CD4-positive, alpha-beta T cell (primary cell): ENCODE measurements at regions of chr2 and their contacts with region 1.

Region 1: DNA sequence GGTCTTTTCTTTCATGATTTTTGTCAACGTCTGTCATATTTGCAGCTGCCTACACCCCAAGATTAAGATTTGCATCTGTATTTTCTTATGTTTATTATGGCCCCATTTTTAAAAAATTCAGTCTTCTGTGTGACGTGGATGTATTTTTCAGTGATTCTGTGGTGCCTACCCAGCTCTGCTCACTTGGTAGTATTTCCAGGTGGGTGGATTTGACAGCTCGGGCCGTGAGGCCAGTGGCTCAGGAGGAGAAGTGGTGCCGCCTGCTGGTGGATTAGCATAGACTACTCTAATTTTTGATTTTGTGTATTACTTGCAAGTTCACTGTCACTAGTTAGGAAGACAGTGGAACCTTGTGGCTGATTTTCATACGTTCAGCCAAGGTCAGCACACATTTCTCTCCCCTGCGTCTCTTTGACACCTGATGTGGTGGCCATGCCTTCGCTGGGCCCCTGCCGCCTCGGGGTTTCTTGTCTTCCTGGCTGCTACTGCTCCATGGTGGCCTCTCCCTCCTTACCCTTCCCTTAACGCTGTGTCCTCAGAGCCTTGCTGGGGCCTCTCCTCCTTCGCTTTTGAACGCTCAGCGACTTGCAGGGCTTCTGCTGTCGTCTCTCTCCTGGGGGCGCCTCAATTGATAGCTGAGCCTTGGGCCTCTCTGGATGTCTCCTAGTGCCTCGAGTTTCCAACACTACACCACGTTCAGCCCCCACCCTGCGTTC is 89.3 kb downstream of the DGKD start:
- DNase-seq: peak; percentile 74 to 92 (median 82)
- ATAC-seq: peak; percentile 99
- H3K4me3 ChIP-seq: no peak overlapping the region
- H3K4me3 Mint-ChIP-seq: no peak overlapping the region
- H3K27ac ChIP-seq: no peak overlapping the region
- H3K27ac Mint-ChIP-seq: peak overlapping the region; percentile 55
- H3K4me1 ChIP-seq: peaks cover 12% of the 10 kb centered on the region
- H3K4me1 Mint-ChIP-seq: peaks cover 32% of the 10 kb centered on the region
- H3K27me3 ChIP-seq: no peaks in the 10 kb centered on the region
- H3K27me3 Mint-ChIP-seq: no peaks in the 10 kb centered on the region
- CTCF ChIP-seq: peak; percentile 95

Region 2: GRCh38 chr2:232761301-232761907 is 682.2 kb before region 1 on chr2:
- CTCF ChIA-PET with region 1: no interaction called
- POLR2A ChIA-PET with region 1: no interaction called
- intact Hi-C with region 1: loop called in 1 of 2 experiments (anchors 5 kb)
- DNase-seq: peak in 10 of 14 experiments; percentile 3 to 65 (median 30)
- ATAC-seq: peak; percentile 76
- H3K4me3 ChIP-seq: no peak overlapping the region
- H3K4me3 Mint-ChIP-seq: no peak overlapping the region
- H3K27ac ChIP-seq: no peak overlapping the region
- H3K27ac Mint-ChIP-seq: no peak overlapping the region
- H3K4me1 ChIP-seq: peaks cover 4% of the 10 kb centered on the region
- H3K4me1 Mint-ChIP-seq: peaks cover 19% of the 10 kb centered on the region
- H3K27me3 ChIP-seq: no peaks in the 10 kb centered on the region
- H3K27me3 Mint-ChIP-seq: no peaks in the 10 kb centered on the region
- CTCF ChIP-seq: peak; percentile 62

Region 3: DNA sequence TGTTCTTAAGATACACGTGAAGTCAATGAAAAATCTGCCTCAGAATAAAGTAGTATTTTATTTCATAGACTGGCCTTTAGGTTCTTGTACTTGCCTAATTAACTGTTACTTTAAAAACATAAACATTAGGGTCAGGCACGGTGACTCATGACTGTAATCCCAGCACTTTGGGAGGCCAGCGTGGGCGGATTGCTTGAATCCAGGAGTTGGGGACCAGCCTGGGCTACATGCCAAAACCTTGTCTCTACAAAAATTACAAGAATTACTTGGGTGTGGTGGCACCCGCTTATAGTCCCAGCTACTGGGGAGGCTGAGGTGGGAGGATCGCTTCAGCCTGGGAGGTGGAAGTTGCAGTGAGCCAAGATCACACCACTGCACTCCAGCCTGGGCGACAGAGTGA is 589.5 kb before region 1 on chr2:
- CTCF ChIA-PET with region 1: interaction called, 5 read pairs
- POLR2A ChIA-PET with region 1: no interaction called
- intact Hi-C with region 1: loop called (anchors 1 to 5 kb)
- DNase-seq: no peak
- ATAC-seq: no peak
- H3K4me3 ChIP-seq: no peak overlapping the region
- H3K4me3 Mint-ChIP-seq: no peak overlapping the region
- H3K27ac ChIP-seq: no peak overlapping the region
- H3K27ac Mint-ChIP-seq: peak overlapping the region; percentile 25
- H3K4me1 ChIP-seq: no peaks in the 10 kb centered on the region
- H3K4me1 Mint-ChIP-seq: no peaks in the 10 kb centered on the region
- H3K27me3 ChIP-seq: no peaks in the 10 kb centered on the region
- H3K27me3 Mint-ChIP-seq: no peaks in the 10 kb centered on the region
- CTCF ChIP-seq: no peak

Region 4: GRCh38 chr2:233288719-233289118 is 154.9 kb before region 1 on chr2:
- CTCF ChIA-PET with region 1: no interaction called
- POLR2A ChIA-PET with region 1: no interaction called
- intact Hi-C with region 1: loop called in 1 of 2 experiments (anchors 10 kb)
- DNase-seq: no peak
- ATAC-seq: no peak
- H3K4me3 ChIP-seq: no peak overlapping the region
- H3K4me3 Mint-ChIP-seq: no peak overlapping the region
- H3K27ac ChIP-seq: no peak overlapping the region
- H3K27ac Mint-ChIP-seq: peak overlapping the region; percentile 42
- H3K4me1 ChIP-seq: no peaks in the 10 kb centered on the region
- H3K4me1 Mint-ChIP-seq: peaks cover 10% of the 10 kb centered on the region
- H3K27me3 ChIP-seq: no peaks in the 10 kb centered on the region
- H3K27me3 Mint-ChIP-seq: no peaks in the 10 kb centered on the region
- CTCF ChIP-seq: no peak

Region 5: GRCh38 chr2:233353769-233354499 is 89.7 kb before region 1 on chr2 and contains the start of gene DGKD:
- CTCF ChIA-PET with region 1: interaction called, 13 read pairs
- POLR2A ChIA-PET with region 1: interaction called, 7 read pairs
- intact Hi-C with region 1: loop called (anchors 1 to 2 kb)
- DNase-seq: peak; percentile 44 to 91 (median 74)
- ATAC-seq: peak; percentile 88
- H3K4me3 ChIP-seq: peak within 1 kb of the TSS; percentile 88
- H3K4me3 Mint-ChIP-seq: peak within 1 kb of the TSS; percentile 95
- H3K27ac ChIP-seq: peak within 1 kb of the TSS in 1 of 2 donors; percentile 40
- H3K27ac Mint-ChIP-seq: peak within 1 kb of the TSS; percentile 76
- H3K4me1 ChIP-seq: peaks cover 48% of the 10 kb centered on the region
- H3K4me1 Mint-ChIP-seq: peaks cover 74% of the 10 kb centered on the region
- H3K27me3 ChIP-seq: no peaks in the 10 kb centered on the region
- H3K27me3 Mint-ChIP-seq: no peaks in the 10 kb centered on the region
- CTCF ChIP-seq: no peak
- total RNA-seq, gene DGKD: 147 to 156 TPM

Region 6: GRCh38 chr2:233404222-233404621 is 39.4 kb before region 1 on chr2:
- CTCF ChIA-PET with region 1: interaction called, 75 read pairs
- POLR2A ChIA-PET with region 1: interaction called, 38 read pairs
- intact Hi-C with region 1: loop called (anchors 1 kb)
- DNase-seq: peak; percentile 54 to 86 (median 70)
- ATAC-seq: peak; percentile 80
- H3K4me3 ChIP-seq: no peak overlapping the region
- H3K4me3 Mint-ChIP-seq: peak overlapping the region; percentile 57
- H3K27ac ChIP-seq: peak overlapping the region in 1 of 2 donors; percentile 24
- H3K27ac Mint-ChIP-seq: peak overlapping the region; percentile 85
- H3K4me1 ChIP-seq: peaks cover 41% of the 10 kb centered on the region
- H3K4me1 Mint-ChIP-seq: peaks cover 83% of the 10 kb centered on the region
- H3K27me3 ChIP-seq: no peaks in the 10 kb centered on the region
- H3K27me3 Mint-ChIP-seq: no peaks in the 10 kb centered on the region
- CTCF ChIP-seq: peak; percentile 87

Region 7: DNA sequence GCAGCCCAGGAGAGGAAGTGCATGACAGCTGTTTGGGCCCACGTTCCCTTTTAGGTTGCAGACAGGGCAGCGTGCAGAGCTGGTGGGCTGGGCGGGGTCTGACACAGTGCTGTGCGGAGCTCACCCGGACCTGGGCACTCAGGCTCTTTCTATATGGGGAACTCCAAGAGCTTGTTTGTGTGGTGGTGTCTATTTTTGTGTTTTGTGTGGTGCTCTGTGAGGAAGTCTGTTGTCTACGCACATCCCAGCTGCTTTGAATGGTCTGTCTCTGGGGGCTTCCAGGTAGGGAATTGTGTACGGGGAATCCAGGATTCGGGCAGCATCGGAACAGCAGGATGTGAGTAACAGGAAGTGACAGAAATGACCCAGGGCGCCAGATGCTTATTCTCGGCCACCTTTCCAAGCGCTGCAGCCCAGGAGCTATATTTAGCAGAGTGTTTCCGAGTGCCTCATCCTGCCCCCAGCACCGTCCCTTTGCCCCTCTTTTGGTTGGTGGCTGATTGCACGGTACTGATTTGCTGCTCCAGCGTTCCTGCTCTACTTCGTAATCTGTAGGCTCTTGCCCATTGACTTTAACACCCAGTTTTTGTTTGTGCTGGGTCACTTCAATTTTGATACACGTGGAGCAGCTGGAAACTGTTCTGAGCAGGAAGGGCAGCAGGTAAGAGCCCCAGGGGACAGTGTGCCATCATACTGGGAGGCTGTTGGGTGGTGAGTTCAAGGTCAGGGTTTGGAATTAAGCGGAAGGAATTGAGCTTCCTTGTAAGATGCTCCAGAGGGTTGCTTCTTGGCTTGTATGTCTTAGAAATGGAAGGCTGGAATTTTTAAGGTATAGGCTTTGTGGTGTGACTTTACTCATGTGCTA is 24.6 kb before region 1 on chr2:
- CTCF ChIA-PET with region 1: interaction called, 54 read pairs
- POLR2A ChIA-PET with region 1: interaction called, 34 read pairs
- intact Hi-C with region 1: loop called in 1 of 2 experiments (anchors 2 kb)
- DNase-seq: peak in 13 of 14 experiments; percentile 31 to 81 (median 63)
- ATAC-seq: peak; percentile 47
- H3K4me3 ChIP-seq: peak overlapping the region; percentile 56
- H3K4me3 Mint-ChIP-seq: peak overlapping the region; percentile 89
- H3K27ac ChIP-seq: peak overlapping the region; percentile 66 to 77
- H3K27ac Mint-ChIP-seq: peak overlapping the region; percentile 95
- H3K4me1 ChIP-seq: peaks cover 98% of the 10 kb centered on the region
- H3K4me1 Mint-ChIP-seq: peaks cover 98% of the 10 kb centered on the region
- H3K27me3 ChIP-seq: no peaks in the 10 kb centered on the region
- H3K27me3 Mint-ChIP-seq: no peaks in the 10 kb centered on the region
- CTCF ChIP-seq: no peak

Region 8: GRCh38 chr2:234003972-234004617 is 560.5 kb after region 1 on chr2:
- CTCF ChIA-PET with region 1: no interaction called
- POLR2A ChIA-PET with region 1: no interaction called
- intact Hi-C with region 1: no loop called
- DNase-seq: peak in 2 of 14 experiments; percentile 16 to 28
- ATAC-seq: no peak
- H3K4me3 ChIP-seq: no peak overlapping the region
- H3K4me3 Mint-ChIP-seq: no peak overlapping the region
- H3K27ac ChIP-seq: no peak overlapping the region
- H3K27ac Mint-ChIP-seq: no peak overlapping the region
- H3K4me1 ChIP-seq: peaks cover 28% of the 10 kb centered on the region
- H3K4me1 Mint-ChIP-seq: peaks cover 27% of the 10 kb centered on the region
- H3K27me3 ChIP-seq: no peaks in the 10 kb centered on the region
- H3K27me3 Mint-ChIP-seq: no peaks in the 10 kb centered on the region
- CTCF ChIP-seq: no peak

Region 9: GRCh38 chr2:234863043-234863934 is 1419.7 kb after region 1 on chr2:
- CTCF ChIA-PET with region 1: no interaction called
- POLR2A ChIA-PET with region 1: no interaction called
- intact Hi-C with region 1: no loop called
- DNase-seq: no peak
- ATAC-seq: no peak
- H3K4me3 ChIP-seq: no peak overlapping the region
- H3K4me3 Mint-ChIP-seq: no peak overlapping the region
- H3K27ac ChIP-seq: no peak overlapping the region
- H3K27ac Mint-ChIP-seq: no peak overlapping the region
- H3K4me1 ChIP-seq: no peaks in the 10 kb centered on the region
- H3K4me1 Mint-ChIP-seq: no peaks in the 10 kb centered on the region
- H3K27me3 ChIP-seq: peaks cover 0 to 2% of the 10 kb centered on the region in 2 experiments
- H3K27me3 Mint-ChIP-seq: peaks cover 9% of the 10 kb centered on the region
- CTCF ChIP-seq: no peak